Gastrocnemius medialis (tissue), 4 donors: ENCODE measurements at regions of chrX and their contacts with region 1.

Region 1: GRCh38 chrX:11499076-11500044 is 166.4 kb downstream of the ARHGAP6 start:
- DNase-seq: no peak
- ATAC-seq: no peak
- H3K4me3 ChIP-seq: no peak overlapping the region
- H3K27ac ChIP-seq: no peak overlapping the region
- H3K4me1 ChIP-seq: no peaks in the 10 kb centered on the region
- H3K27me3 ChIP-seq: no peaks in the 10 kb centered on the region
- CTCF ChIP-seq: no peak
- POLR2A ChIP-seq: no peak

Region 2: DNA sequence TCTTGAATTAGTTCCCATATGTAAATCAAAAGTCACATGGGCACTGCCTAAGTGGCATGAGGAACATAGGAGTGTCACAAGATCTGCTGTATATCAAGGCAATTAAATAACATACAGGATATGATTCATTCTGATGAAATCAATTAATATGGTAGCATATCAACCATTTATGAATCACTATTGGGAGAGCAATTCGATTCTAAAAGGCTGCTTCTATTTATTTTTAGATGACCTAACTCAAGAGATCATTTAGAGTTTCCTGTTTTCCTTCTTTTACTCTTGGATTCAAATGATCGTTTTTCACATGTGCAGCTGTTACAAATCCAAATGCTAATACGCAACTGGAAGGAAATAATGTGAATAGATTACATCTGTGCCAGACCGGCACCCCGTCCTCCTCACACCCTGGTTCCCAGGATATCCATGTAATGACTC is 306.3 kb before region 1 on chrX:
- in situ Hi-C with region 1: no loop called
- intact Hi-C with region 1: no loop called
- DNase-seq: peak in 1 of 2 donors; percentile 12
- ATAC-seq: no peak
- H3K4me3 ChIP-seq: no peak overlapping the region
- H3K27ac ChIP-seq: peak overlapping the region in 3 of 4 donors; percentile 37 to 56 (median 43)
- H3K4me1 ChIP-seq: peaks cover 0 to 9% of the 10 kb centered on the region in 2 donors
- H3K27me3 ChIP-seq: no peaks in the 10 kb centered on the region
- CTCF ChIP-seq: no peak
- POLR2A ChIP-seq: no peak

Region 3: GRCh38 chrX:11381464-11381863 is 117.9 kb before region 1 on chrX:
- in situ Hi-C with region 1: no loop called
- intact Hi-C with region 1: loop called (anchors 10 kb)
- DNase-seq: peak; percentile 3 to 19
- ATAC-seq: peak; percentile 71 to 74
- H3K4me3 ChIP-seq: no peak overlapping the region
- H3K27ac ChIP-seq: no peak overlapping the region
- H3K4me1 ChIP-seq: no peaks in the 10 kb centered on the region
- H3K27me3 ChIP-seq: no peaks in the 10 kb centered on the region
- CTCF ChIP-seq: peak in 4 of 5 experiments; percentile 29 to 45 (median 44)
- POLR2A ChIP-seq: no peak

Region 4: DNA sequence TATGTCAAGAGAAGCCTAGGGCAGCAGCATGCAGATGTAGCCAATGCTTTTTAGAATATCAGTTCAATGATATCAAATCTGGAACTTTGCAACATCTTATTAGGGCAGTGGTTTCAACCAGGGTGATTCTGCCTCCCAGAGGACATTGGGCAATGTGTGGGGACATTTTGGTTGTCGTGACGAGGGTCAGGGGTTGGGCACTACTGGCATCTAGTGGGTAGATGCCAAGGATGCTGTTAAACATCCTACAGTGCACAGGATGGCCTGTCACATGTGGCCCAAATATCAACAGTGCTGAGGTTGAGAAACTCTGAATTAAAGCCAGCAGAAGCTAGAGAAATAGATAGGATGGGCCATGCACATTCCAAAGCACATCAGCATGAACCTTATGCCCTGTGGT is 53.8 kb before region 1 on chrX:
- in situ Hi-C with region 1: no loop called
- intact Hi-C with region 1: loop called (anchors 10 kb)
- DNase-seq: no peak
- ATAC-seq: no peak
- H3K4me3 ChIP-seq: no peak overlapping the region
- H3K27ac ChIP-seq: no peak overlapping the region
- H3K4me1 ChIP-seq: peaks cover 0 to under 1% of the 10 kb centered on the region in 2 donors
- H3K27me3 ChIP-seq: no peaks in the 10 kb centered on the region
- CTCF ChIP-seq: no peak
- POLR2A ChIP-seq: no peak